GM12878 (cell line): ENCODE measurements at regions of chr2 and their contacts with region 1.

Region 1: GRCh38 chr2:73099486-73099885 is 13.3 kb downstream of the RAB11FIP5 start:
- DNase-seq: no peak
- ATAC-seq: no peak
- H3K4me3 ChIP-seq: no peak overlapping the region
- H3K27ac ChIP-seq: no peak overlapping the region
- H3K4me1 ChIP-seq: no peaks in the 10 kb centered on the region
- H3K27me3 ChIP-seq: no peaks in the 10 kb centered on the region; a peak in 2 of 4 replicates
- CTCF ChIP-seq: no peak
- EP300 ChIP-seq: no peak
- POLR2A ChIP-seq: no peak
- RAD21 ChIP-seq: no peak

Region 2: GRCh38 chr2:73013936-73014335 is 85.5 kb before region 1 on chr2:
- CTCF ChIA-PET with region 1: no interaction called
- POLR2A ChIA-PET with region 1: no interaction called
- RAD21 ChIA-PET with region 1: no interaction called
- SMC1A ChIA-PET with region 1: no interaction called
- in situ Hi-C with region 1: no loop called
- intact Hi-C with region 1: no loop called
- DNase-seq: no peak
- ATAC-seq: no peak
- H3K4me3 ChIP-seq: no peak overlapping the region
- H3K27ac ChIP-seq: no peak overlapping the region
- H3K4me1 ChIP-seq: no peaks in the 10 kb centered on the region
- H3K27me3 ChIP-seq: no peaks in the 10 kb centered on the region
- CTCF ChIP-seq: no peak
- EP300 ChIP-seq: no peak
- POLR2A ChIP-seq: no peak
- RAD21 ChIP-seq: no peak

Region 3: GRCh38 chr2:73085691-73086360 is 13.7 kb before region 1 on chr2:
- CTCF ChIA-PET with region 1: interaction called, 10 read pairs
- POLR2A ChIA-PET with region 1: no interaction called
- RAD21 ChIA-PET with region 1: no interaction called
- SMC1A ChIA-PET with region 1: no interaction called
- in situ Hi-C with region 1: no loop called
- intact Hi-C with region 1: no loop called
- DNase-seq: no peak
- ATAC-seq: peak; percentile 98
- H3K4me3 ChIP-seq: no peak overlapping the region
- H3K27ac ChIP-seq: no peak overlapping the region
- H3K4me1 ChIP-seq: no peaks in the 10 kb centered on the region
- H3K27me3 ChIP-seq: no peaks in the 10 kb centered on the region; a peak in 2 of 4 replicates
- CTCF ChIP-seq: peak; percentile 93 to 95 (median 94)
- EP300 ChIP-seq: no peak
- POLR2A ChIP-seq: no peak
- RAD21 ChIP-seq: peak; percentile 92